IMR-90 (cell line): ENCODE measurements at regions of chr6 and their contacts with region 1.

Region 1: DNA sequence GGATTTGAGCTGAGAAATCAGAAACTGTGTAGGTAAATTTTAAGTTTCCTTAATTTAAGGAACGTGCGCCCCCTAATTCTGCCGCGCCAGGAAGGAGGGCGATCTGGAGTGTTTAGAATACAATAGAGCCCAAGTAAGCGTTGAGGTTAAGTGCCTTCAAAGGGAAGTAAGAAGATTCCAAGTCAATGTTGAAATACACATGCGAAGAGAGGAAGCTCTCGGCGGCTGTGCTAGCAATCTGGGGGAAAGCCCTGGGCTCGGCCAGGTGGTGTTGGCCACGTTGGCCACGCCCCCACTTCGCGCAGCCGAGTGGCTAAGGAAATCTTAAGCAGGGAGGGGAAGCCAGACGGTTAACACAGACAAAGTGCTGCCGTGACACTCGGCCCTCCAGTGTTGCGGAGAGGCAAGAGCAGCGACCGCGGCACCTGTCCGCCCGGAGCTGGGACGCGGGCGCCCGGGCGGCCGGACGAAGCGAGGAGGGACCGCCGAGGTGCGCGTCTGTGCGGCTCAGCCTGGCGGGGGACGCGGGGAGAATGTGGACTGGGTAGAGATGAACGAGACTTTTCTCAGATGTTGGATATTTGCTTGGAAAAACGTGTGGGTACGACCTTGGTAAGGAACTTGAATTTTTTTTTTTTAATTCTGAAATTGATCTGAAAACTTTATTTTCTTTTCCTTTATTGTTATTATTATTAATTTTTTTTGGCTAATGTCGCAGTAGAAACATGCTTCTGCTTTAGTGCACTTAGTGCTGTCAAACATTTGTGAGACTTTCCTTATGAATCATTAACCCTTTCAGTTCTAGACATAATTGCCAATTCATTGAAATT is at the start of gene PRDM1:
- DNase-seq: peak; percentile 72
- ATAC-seq: peak; percentile 20
- H3K4me3 ChIP-seq: peak within 1 kb of the TSS; percentile 85
- H3K27ac ChIP-seq: peak within 1 kb of the TSS; percentile 75
- H3K4me1 ChIP-seq: peaks cover 20% of the 10 kb centered on the region
- H3K27me3 ChIP-seq: no peaks in the 10 kb centered on the region
- CTCF ChIP-seq: 0 out of 2 replicates have a peak, but pooled peaks have one; percentile 15
- POLR2A ChIP-seq: peak; percentile 48; the same call in 1 of the 2 replicates
- RAD21 ChIP-seq: peak; percentile 42
- total RNA-seq, gene PRDM1: 2.3 and 6.9 TPM in 2 replicates

Region 2: DNA sequence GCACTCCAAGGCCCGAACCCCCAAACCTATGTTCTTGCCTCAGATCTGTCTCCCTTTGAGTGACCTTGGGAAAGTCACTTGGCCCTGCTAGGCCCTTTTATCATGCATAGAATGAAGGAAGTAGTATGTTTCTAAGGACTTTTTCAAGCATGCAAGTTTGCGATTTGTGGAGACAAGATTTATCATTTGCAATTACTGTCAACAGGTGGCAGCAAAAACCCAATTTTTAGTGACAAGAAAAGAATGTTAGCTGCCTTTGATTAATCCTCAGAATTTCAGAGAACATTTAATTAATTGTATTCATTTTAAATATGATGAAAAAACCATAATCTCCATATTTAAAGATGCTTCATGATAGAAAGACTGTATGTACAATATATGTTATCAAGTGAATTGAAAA is 655.0 kb before region 1 on chr6:
- CTCF ChIA-PET with region 1: interaction called, 8 read pairs
- POLR2A ChIA-PET with region 1: no interaction called
- dilution Hi-C with region 1: no loop called
- in situ Hi-C with region 1: no loop called
- intact Hi-C with region 1: loop called (anchors 5 kb)
- DNase-seq: peak; percentile 68
- ATAC-seq: no peak
- H3K4me3 ChIP-seq: no peak overlapping the region
- H3K27ac ChIP-seq: no peak overlapping the region
- H3K4me1 ChIP-seq: peaks cover 23% of the 10 kb centered on the region
- H3K27me3 ChIP-seq: no peaks in the 10 kb centered on the region
- CTCF ChIP-seq: peak; percentile 70
- POLR2A ChIP-seq: no peak
- RAD21 ChIP-seq: peak; percentile 61

Region 3: DNA sequence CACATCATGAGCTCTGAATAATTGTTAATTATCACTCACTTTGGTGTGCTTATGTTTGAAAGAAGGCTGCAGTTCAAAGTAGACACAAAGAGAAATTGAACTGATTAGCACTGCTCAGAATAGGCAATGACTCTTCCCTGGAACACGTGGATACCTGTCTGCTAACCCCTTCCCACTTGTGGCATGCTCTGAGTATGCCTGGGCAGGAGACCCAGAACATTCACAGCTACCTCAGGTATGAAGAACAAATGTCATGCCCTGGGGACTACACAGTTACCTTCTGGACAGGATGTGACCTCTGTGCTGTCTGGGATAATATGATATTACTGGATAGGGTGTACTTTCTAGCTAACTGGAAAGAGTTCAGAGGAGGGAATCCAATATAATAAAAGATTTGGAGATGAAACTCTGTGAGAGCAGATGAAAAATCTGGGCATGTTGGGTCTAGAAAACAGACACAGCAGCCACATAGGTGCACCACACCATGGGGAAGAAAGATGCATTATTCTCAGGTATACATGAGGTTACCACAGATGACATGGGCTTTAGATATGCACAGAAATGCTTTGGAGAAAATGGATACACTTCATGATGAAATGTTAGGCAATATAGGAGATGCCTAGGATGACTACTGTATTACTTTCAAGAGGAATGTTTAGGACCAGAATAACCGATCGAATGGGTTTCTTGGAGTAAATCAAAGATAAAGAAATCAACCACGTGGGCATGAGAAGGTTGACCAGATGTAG is 359.1 kb before region 1 on chr6:
- CTCF ChIA-PET with region 1: no interaction called
- POLR2A ChIA-PET with region 1: interaction called, 10 read pairs
- dilution Hi-C with region 1: no loop called
- in situ Hi-C with region 1: no loop called
- intact Hi-C with region 1: loop called (anchors 2 kb)
- DNase-seq: peak; percentile 66
- ATAC-seq: peak; percentile 60; the same call in 1 of the 2 replicates
- H3K4me3 ChIP-seq: no peak overlapping the region
- H3K27ac ChIP-seq: no peak overlapping the region
- H3K4me1 ChIP-seq: peaks cover 4% of the 10 kb centered on the region; the same call in 1 of the 2 replicates
- H3K27me3 ChIP-seq: no peaks in the 10 kb centered on the region
- CTCF ChIP-seq: no peak
- POLR2A ChIP-seq: no peak
- RAD21 ChIP-seq: no peak

Region 4: GRCh38 chr6:105793130-105793529 is 293.1 kb before region 1 on chr6:
- CTCF ChIA-PET with region 1: no interaction called
- POLR2A ChIA-PET with region 1: no interaction called
- dilution Hi-C with region 1: no loop called
- in situ Hi-C with region 1: no loop called
- intact Hi-C with region 1: loop called (anchors 10 kb)
- DNase-seq: no peak
- ATAC-seq: no peak
- H3K4me3 ChIP-seq: no peak overlapping the region
- H3K27ac ChIP-seq: no peak overlapping the region
- H3K4me1 ChIP-seq: peaks cover 6% of the 10 kb centered on the region
- H3K27me3 ChIP-seq: no peaks in the 10 kb centered on the region
- CTCF ChIP-seq: 0 out of 2 replicates have a peak, but pooled peaks have one; percentile 6
- POLR2A ChIP-seq: no peak
- RAD21 ChIP-seq: peak; percentile 30; the same call in 1 of the 2 replicates

Region 5: GRCh38 chr6:106037060-106037459 is 49.1 kb before region 1 on chr6:
- CTCF ChIA-PET with region 1: interaction called, 4 read pairs
- POLR2A ChIA-PET with region 1: no interaction called
- dilution Hi-C with region 1: no loop called
- in situ Hi-C with region 1: no loop called
- intact Hi-C with region 1: loop called (anchors 5 kb)
- DNase-seq: peak; percentile 85
- ATAC-seq: peak; percentile 75
- H3K4me3 ChIP-seq: no peak overlapping the region
- H3K27ac ChIP-seq: no peak overlapping the region
- H3K4me1 ChIP-seq: no peaks in the 10 kb centered on the region; the same call in 1 of the 2 replicates
- H3K27me3 ChIP-seq: no peaks in the 10 kb centered on the region
- CTCF ChIP-seq: no peak
- POLR2A ChIP-seq: no peak
- RAD21 ChIP-seq: no peak

Region 6: DNA sequence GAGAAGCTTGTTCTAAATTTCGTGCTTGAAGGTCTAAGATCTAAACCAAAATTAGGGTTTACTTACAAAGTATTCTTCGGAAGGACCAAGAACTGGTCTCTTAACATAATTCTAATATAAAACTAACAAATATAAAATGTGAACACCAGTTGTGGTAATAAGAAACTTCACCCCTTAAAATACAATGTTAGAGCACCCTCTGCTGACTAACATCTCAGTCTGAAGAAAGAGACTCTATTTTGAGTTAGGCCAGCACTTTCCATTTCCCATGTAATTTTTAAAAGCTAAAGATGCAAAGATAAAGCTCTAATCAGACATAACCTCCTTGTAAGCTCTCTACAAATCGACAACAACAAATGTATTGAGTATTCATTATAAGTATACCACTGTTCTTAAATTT is 214.7 kb after region 1 on chr6:
- CTCF ChIA-PET with region 1: no interaction called
- POLR2A ChIA-PET with region 1: no interaction called
- dilution Hi-C with region 1: no loop called
- in situ Hi-C with region 1: loop called (anchors 10 kb)
- intact Hi-C with region 1: loop called (anchors 1 kb)
- DNase-seq: peak; percentile 65
- ATAC-seq: peak; percentile 79
- H3K4me3 ChIP-seq: no peak overlapping the region
- H3K27ac ChIP-seq: no peak overlapping the region
- H3K4me1 ChIP-seq: no peaks in the 10 kb centered on the region
- H3K27me3 ChIP-seq: no peaks in the 10 kb centered on the region
- CTCF ChIP-seq: peak; percentile 69
- POLR2A ChIP-seq: no peak
- RAD21 ChIP-seq: peak; percentile 71